Activated CD8-positive, alpha-beta T cell treated with anti-CD3 and anti-CD28 coated beads, Interleukin-2, amount 10 ng/mL, durations not matched to agents 7 days and 5 days (primary cell): ENCODE measurements at regions of chr17 and their contacts with region 1.

Region 1: DNA sequence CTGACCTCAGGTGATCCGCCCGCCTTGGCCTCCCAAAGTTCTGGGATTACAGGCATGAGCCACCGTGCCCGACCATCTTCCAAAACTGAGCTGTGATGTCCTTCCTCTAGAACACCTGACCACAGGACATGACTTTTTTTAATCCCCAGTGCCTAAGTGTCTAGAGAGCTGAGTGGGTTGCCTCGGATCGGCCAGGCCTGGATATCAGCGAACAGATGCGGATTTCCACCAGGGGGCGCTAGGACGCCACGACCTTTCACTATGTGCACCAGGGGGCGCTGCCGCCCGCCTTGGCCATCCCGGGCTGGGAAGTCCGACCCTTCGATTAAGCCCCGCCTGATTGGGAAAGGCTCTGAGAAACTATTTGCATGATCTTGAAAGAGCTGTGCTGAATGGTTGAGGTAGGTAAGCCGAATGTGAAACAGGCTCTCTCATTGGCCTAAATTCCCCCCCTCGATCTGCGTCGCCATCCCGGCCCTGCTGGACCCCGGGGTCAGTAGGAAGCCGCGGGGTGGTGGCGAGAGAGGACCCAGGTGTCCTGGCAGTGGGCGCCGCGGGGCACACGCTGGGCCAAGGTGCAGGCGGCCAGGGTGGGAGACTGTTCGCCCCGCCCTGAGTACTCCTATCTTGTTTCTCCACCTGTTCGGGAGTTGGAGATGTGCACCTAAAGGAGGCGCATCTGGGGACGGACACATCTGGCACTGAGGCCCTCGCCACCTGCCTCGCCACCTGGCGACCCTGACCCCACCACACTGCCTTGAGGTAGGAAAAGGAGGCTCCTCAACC is at the start of gene ACBD4:
- DNase-seq: peak; percentile 98
- ATAC-seq: peak; percentile 92
- H3K4me3 Mint-ChIP-seq: peak within 1 kb of the TSS; percentile 88
- H3K27ac Mint-ChIP-seq: peak within 1 kb of the TSS; percentile 84
- H3K4me1 Mint-ChIP-seq: peaks cover 22% of the 10 kb centered on the region
- H3K27me3 Mint-ChIP-seq: peaks cover 10% of the 10 kb centered on the region
- total RNA-seq, gene ACBD4: 10.0 to 12.5 TPM

Region 2: GRCh38 chr17:44988044-44988942 is 147.1 kb before region 1 on chr17:
- CTCF ChIA-PET with region 1: no interaction called
- POLR2A ChIA-PET with region 1: no interaction called
- DNase-seq: no peak
- ATAC-seq: peak; percentile 21
- H3K4me3 Mint-ChIP-seq: no peak overlapping the region
- H3K27ac Mint-ChIP-seq: no peak overlapping the region
- H3K4me1 Mint-ChIP-seq: peaks cover 6% of the 10 kb centered on the region
- H3K27me3 Mint-ChIP-seq: peaks cover 37% of the 10 kb centered on the region

Region 3: GRCh38 chr17:45051060-45051719 is 84.2 kb before region 1 on chr17 and contains the start of gene DCAKD:
- CTCF ChIA-PET with region 1: interaction called, 23 read pairs
- POLR2A ChIA-PET with region 1: no interaction called
- DNase-seq: peak; percentile 94
- ATAC-seq: peak; percentile 98
- H3K4me3 Mint-ChIP-seq: peak within 1 kb of the TSS; percentile 97
- H3K27ac Mint-ChIP-seq: peak within 1 kb of the TSS; percentile 97
- H3K4me1 Mint-ChIP-seq: peaks cover 48% of the 10 kb centered on the region
- H3K27me3 Mint-ChIP-seq: no peaks in the 10 kb centered on the region
- total RNA-seq, gene DCAKD: 32.9 to 33.7 TPM

Region 4: GRCh38 chr17:45120558-45120957 is 14.8 kb before region 1 on chr17:
- CTCF ChIA-PET with region 1: interaction called, 23 read pairs
- POLR2A ChIA-PET with region 1: no interaction called
- DNase-seq: no peak
- ATAC-seq: no peak
- H3K4me3 Mint-ChIP-seq: no peak overlapping the region
- H3K27ac Mint-ChIP-seq: no peak overlapping the region
- H3K4me1 Mint-ChIP-seq: no peaks in the 10 kb centered on the region
- H3K27me3 Mint-ChIP-seq: peaks cover 12% of the 10 kb centered on the region

Region 5: DNA sequence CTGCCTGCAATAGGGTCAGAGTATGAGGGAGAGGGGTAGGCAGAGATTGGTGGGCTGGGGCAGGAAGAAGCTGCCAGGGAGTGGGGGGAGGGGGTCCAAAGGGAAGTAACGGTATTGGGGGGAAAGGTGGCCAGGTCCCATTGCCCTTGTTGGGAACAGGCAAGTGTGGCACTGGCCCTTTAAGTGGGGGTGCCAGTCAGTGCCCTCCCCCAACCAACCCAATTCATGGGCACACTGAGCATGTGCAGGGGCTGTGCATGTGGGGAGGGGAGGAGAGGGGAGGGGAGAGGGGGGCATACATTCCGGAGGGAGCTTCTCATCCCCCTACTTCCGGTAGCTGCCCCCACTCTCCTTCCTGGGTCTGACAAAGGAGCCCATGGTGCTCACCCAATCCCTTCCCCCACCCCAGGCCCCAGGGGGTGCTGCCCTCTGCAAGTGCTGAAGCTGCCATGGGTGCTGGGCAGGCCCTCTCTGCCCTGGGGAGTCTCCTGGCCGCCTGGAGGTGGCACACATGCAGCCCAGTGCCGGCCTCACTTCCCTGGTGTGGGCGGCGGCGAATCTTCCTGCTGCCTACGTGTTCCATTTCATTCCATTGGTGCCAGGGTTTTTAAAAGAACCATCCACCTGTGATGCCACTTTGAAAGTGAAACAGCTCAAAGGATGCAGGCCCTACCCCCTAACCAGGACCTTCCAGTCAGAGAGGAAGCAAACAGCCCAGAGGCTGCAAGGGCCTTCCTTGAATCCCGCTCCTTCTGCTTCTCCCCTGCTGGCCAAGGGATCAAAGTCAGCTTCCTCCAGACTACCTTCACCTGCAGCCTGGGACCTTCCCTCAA is 37.3 kb after region 1 on chr17:
- CTCF ChIA-PET with region 1: interaction called, 49 read pairs
- POLR2A ChIA-PET with region 1: no interaction called
- DNase-seq: peak; percentile 68
- ATAC-seq: peak; percentile 79
- H3K4me3 Mint-ChIP-seq: peak overlapping the region; percentile 65
- H3K27ac Mint-ChIP-seq: peak overlapping the region; percentile 96
- H3K4me1 Mint-ChIP-seq: peaks cover 23% of the 10 kb centered on the region
- H3K27me3 Mint-ChIP-seq: no peaks in the 10 kb centered on the region

Region 6: GRCh38 chr17:45197555-45198334 is 62.4 kb after region 1 on chr17:
- CTCF ChIA-PET with region 1: interaction called, 365 read pairs
- POLR2A ChIA-PET with region 1: interaction called, 10 read pairs
- DNase-seq: peak; percentile 88
- ATAC-seq: peak; percentile 100
- H3K4me3 Mint-ChIP-seq: no peak overlapping the region
- H3K27ac Mint-ChIP-seq: no peak overlapping the region
- H3K4me1 Mint-ChIP-seq: peaks cover 5% of the 10 kb centered on the region
- H3K27me3 Mint-ChIP-seq: no peaks in the 10 kb centered on the region

Region 7: DNA sequence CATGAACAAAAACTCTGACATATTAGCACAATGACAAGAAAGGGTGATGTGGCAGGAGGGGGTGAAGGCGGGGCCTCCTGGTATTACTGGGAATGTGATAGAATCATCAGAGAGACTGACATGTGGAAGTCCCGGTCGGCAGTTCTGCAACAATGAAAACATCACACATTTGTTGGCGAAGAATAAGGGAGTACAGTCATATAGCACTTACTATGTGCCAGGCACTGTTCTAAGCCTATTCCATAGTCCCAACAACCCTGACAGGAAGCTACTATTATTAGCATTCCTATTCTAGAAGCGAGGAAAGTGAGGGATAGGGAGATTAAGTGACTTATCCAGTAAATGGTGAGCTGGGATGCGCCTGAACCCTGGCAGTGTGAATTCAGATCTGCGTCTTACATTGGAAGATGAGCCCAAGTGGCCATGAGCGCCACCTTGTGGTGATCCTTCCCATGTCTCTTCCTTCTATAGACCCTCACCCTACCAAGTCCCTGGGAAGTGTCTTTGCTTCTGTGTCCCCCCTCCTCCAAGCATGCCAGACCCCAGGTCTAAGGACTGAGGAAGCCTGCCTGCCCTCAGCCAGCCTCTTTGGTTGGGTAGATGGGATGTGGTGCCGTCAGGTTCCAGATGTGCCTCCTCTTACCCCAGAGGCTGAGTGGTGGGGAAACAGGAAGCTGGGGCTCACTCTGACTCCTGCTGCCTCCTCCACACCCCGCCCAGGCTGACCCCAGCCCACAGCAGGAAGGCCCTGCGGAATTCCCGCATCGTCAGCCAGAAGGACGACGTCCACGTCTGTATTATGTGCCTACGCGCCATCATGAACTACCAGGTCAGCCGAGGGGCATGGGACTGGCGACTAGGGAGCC is 100.3 kb after region 1 on chr17:
- CTCF ChIA-PET with region 1: interaction called, 12 read pairs
- POLR2A ChIA-PET with region 1: no interaction called
- DNase-seq: peak; percentile 86
- ATAC-seq: peak; percentile 68
- H3K4me3 Mint-ChIP-seq: no peak overlapping the region
- H3K27ac Mint-ChIP-seq: peak overlapping the region; percentile 60
- H3K4me1 Mint-ChIP-seq: peaks cover 62% of the 10 kb centered on the region
- H3K27me3 Mint-ChIP-seq: no peaks in the 10 kb centered on the region

Region 8: GRCh38 chr17:45317112-45317928 is 181.9 kb after region 1 on chr17:
- CTCF ChIA-PET with region 1: interaction called, 28 read pairs
- POLR2A ChIA-PET with region 1: interaction called, 3 read pairs
- DNase-seq: peak; percentile 100
- ATAC-seq: peak; percentile 90
- H3K4me3 Mint-ChIP-seq: peak overlapping the region; percentile 83
- H3K27ac Mint-ChIP-seq: peak overlapping the region; percentile 93
- H3K4me1 Mint-ChIP-seq: peaks cover 73% of the 10 kb centered on the region
- H3K27me3 Mint-ChIP-seq: no peaks in the 10 kb centered on the region